Right lobe of liver (tissue), 6 donors: ENCODE measurements at regions of chr7 and their contacts with region 1.

Region 1: DNA sequence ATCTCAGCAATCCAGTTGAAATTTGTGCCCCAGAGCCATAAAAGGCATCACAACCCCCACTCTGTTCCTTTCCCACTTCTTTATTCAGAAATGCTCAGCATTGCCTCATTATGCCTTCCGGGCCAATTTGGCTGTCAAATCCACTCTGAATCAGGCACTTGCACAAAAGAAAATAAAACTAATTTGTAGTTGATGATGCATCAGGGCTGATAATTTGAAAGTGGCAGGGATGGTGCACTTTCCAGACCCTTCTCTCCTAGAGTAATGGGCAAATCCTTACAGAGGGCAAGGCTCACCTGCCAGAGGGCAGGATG is 147.9 kb upstream of the PDE1C start:
- DNase-seq: no peak
- ATAC-seq: no peak
- H3K4me3 ChIP-seq: no peak overlapping the region
- H3K27ac ChIP-seq: no peak overlapping the region
- H3K4me1 ChIP-seq: no peaks in the 10 kb centered on the region
- H3K27me3 ChIP-seq: no peaks in the 10 kb centered on the region
- CTCF ChIP-seq: no peak
- POLR2A ChIP-seq: no peak

Region 2: GRCh38 chr7:32479574-32480200 is 261.6 kb after region 1 on chr7:
- intact Hi-C with region 1: loop called in 1 of 2 experiments (anchors 10 kb)
- DNase-seq: no peak
- ATAC-seq: peak; percentile 67 to 73 (median 68)
- H3K4me3 ChIP-seq: no peak overlapping the region
- H3K27ac ChIP-seq: no peak overlapping the region
- H3K4me1 ChIP-seq: no peaks in the 10 kb centered on the region
- H3K27me3 ChIP-seq: no peaks in the 10 kb centered on the region
- CTCF ChIP-seq: peak; percentile 66 to 85 (median 72)
- POLR2A ChIP-seq: no peak